Prostate gland (tissue), 2 donors: ENCODE measurements at regions of chr9 and their contacts with region 1.

Region 1: DNA sequence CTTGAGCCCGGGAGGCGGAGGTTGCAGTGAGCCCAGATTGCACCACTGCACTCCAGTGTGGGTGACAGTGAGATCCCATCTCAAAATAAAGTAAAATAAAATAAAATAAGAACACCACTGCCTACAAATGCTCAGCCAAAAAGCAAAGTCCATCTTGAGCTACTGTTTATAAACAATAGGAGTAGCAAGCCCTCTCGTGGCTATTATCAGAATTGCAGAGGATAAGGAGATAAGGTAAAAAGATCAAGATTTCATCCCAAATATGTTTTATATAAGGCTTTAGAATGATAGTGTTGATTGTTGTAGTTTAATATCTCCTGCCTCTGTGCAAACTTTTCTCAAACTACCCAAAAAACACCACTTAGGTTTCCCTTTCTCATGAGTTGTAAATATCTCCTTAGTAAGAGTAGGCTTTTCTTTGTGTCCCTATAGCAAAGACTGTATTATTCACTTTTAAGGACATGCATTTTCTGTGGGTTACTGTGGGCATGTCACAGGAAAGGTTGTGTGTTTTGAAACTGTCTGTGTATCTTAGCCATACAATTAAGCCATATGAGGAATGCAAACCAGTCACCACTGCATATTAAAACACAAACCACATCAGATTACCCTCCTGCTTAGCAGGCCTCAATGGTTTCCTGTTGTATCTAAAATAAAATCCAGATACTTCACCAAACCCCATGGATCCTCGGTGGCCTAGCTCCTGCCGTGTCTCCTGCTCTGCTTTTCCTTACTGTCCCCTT is 31.8 kb upstream of the CKS2 start:
- DNase-seq: no peak
- H3K4me3 ChIP-seq: no peak overlapping the region
- H3K27ac ChIP-seq: no peak overlapping the region
- H3K4me1 ChIP-seq: no peaks in the 10 kb centered on the region
- H3K27me3 ChIP-seq: no peaks in the 10 kb centered on the region
- CTCF ChIP-seq: peak in 3 of 4 experiments; percentile 57 to 70 (median 69)
- POLR2A ChIP-seq: no peak

Region 2: DNA sequence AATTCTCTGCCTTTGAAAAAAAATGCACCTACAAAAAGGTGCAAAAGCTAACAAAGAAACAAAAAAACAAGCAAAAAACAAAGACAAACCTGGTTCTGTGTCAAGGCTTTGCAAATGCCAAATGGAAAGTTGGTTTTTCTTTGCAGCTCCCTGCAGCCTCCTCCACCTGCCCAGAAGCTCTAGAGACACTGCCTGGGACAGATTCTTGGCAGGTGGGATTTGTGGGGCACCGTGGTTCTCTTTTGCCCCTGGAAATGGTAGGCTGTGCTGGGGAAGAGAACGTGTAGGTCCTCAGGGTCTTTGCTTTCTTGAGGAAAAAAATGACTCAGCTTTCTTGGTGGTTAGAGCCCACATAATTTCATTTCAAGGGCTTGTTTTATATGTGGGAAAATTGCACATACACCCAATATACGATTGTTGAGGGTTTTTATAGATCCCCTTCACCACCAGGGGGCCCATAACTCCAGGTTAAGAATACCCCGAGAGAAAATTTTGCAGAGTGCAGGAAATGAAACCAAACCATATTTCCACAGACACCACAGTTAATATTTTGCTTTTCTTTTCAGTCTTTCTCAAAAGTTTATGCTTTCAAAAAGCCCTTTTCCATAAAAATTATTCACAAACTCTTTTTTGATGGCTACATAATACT is 685.5 kb before region 1 on chr9:
- intact Hi-C with region 1: loop called (anchors 10 kb)
- DNase-seq: peak; percentile 59
- H3K4me3 ChIP-seq: no peak overlapping the region
- H3K27ac ChIP-seq: no peak overlapping the region
- H3K4me1 ChIP-seq: peaks cover 2% of the 10 kb centered on the region
- H3K27me3 ChIP-seq: no peaks in the 10 kb centered on the region
- CTCF ChIP-seq: peak in 3 of 4 experiments; percentile 73 to 83 (median 77)
- POLR2A ChIP-seq: no peak

Region 3: GRCh38 chr9:88835038-88835466 is 444.1 kb before region 1 on chr9:
- intact Hi-C with region 1: no loop called
- DNase-seq: no peak
- H3K4me3 ChIP-seq: no peak overlapping the region
- H3K27ac ChIP-seq: no peak overlapping the region
- H3K4me1 ChIP-seq: no peaks in the 10 kb centered on the region
- H3K27me3 ChIP-seq: no peaks in the 10 kb centered on the region
- CTCF ChIP-seq: no peak
- POLR2A ChIP-seq: no peak

Region 4: GRCh38 chr9:88905506-88905905 is 373.7 kb before region 1 on chr9:
- intact Hi-C with region 1: no loop called
- DNase-seq: no peak
- H3K4me3 ChIP-seq: no peak overlapping the region
- H3K27ac ChIP-seq: no peak overlapping the region
- H3K4me1 ChIP-seq: no peaks in the 10 kb centered on the region
- H3K27me3 ChIP-seq: no peaks in the 10 kb centered on the region
- CTCF ChIP-seq: no peak
- POLR2A ChIP-seq: no peak

Region 5: DNA sequence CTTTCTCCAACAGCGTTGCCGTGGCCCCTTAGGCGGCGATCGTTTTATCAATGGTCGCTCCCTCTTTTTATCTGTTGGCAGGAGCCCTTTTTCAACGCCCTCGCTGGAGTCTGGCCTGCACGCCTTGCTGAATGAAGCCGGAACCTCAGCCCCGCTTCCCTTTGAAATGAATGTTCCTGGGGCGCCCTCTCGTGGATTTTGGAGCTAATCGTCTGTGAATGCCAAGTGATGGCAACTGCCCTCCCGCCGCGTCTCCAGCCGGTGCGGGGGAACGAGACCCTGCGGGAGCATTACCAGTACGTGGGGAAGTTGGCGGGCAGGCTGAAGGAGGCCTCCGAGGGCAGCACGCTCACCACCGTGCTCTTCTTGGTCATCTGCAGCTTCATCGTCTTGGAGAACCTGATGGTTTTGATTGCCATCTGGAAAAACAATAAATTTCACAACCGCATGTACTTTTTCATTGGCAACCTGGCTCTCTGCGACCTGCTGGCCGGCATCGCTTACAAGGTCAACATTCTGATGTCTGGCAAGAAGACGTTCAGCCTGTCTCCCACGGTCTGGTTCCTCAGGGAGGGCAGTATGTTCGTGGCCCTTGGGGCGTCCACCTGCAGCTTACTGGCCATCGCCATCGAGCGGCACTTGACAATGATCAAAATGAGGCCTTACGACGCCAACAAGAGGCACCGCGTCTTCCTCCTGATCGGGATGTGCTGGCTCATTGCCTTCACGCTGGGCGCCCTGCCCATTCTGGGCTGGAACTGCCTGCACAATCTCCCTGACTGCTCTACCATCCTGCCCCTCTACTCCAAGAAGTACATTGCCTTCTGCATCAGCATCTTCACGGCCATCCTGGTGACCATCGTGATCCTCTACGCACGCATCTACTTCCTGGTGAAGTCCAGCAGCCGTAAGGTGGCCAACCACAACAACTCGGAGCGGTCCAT is 277.9 kb before region 1 on chr9:
- intact Hi-C with region 1: loop called (anchors 10 kb)
- DNase-seq: peak; percentile 85
- H3K4me3 ChIP-seq: peak overlapping the region in 1 of 2 donors; percentile 9
- H3K27ac ChIP-seq: peak overlapping the region; percentile 43 to 48
- H3K4me1 ChIP-seq: no peaks in the 10 kb centered on the region
- H3K27me3 ChIP-seq: no peaks in the 10 kb centered on the region
- CTCF ChIP-seq: peak; percentile 75 to 89 (median 86)
- POLR2A ChIP-seq: no peak

Region 6: GRCh38 chr9:89137542-89138462 is 141.4 kb before region 1 on chr9:
- intact Hi-C with region 1: no loop called
- DNase-seq: peak; percentile 15
- H3K4me3 ChIP-seq: no peak overlapping the region
- H3K27ac ChIP-seq: no peak overlapping the region
- H3K4me1 ChIP-seq: no peaks in the 10 kb centered on the region
- H3K27me3 ChIP-seq: no peaks in the 10 kb centered on the region
- CTCF ChIP-seq: no peak
- POLR2A ChIP-seq: no peak

Region 7: DNA sequence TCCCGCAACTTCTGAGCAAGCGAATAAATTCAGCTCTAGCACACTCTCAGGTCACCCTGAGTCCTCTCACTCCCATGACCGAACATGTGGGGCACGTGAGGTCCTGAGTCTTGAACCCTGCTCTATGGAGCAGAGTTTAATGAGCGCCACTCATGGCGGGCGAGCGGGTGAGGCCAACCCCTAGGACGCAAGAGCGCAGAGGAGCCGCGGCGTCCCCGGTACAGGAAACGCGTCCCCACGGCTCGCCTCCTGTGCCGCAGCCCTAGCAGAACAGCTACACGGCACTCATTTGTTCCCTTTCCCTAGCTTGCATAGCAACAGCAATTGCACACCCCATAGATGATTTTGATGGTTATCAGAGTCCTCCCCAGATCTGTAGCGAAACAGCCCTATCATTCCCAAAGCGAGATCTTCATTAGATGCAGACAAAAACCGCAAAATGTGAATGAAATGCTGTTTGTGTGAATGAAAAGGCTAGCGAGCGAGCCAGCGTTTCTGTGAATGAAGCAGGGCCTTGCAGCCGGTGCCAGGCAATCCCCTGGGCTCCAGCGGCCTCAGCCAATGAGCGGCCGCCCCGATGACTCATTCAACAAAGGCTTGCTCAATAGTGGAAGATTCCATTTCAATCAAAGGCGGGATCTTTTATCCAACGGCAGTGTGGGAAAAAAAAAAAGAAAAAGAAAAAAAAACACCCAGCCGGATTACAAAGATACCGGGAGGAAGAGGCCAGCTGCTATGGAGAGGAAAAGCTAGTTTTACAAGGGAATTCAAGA is 99.1 kb before region 1 on chr9:
- intact Hi-C with region 1: loop called (anchors 10 kb)
- DNase-seq: peak; percentile 88
- H3K4me3 ChIP-seq: peak overlapping the region; percentile 16 to 25
- H3K27ac ChIP-seq: peak overlapping the region; percentile 61 to 70
- H3K4me1 ChIP-seq: no peaks in the 10 kb centered on the region
- H3K27me3 ChIP-seq: peaks cover 6% of the 10 kb centered on the region
- CTCF ChIP-seq: no peak
- POLR2A ChIP-seq: peak; percentile 62